Sigmoid colon (tissue), 7 donors: ENCODE measurements at regions of chr9 and their contacts with region 1.

Region 1: DNA sequence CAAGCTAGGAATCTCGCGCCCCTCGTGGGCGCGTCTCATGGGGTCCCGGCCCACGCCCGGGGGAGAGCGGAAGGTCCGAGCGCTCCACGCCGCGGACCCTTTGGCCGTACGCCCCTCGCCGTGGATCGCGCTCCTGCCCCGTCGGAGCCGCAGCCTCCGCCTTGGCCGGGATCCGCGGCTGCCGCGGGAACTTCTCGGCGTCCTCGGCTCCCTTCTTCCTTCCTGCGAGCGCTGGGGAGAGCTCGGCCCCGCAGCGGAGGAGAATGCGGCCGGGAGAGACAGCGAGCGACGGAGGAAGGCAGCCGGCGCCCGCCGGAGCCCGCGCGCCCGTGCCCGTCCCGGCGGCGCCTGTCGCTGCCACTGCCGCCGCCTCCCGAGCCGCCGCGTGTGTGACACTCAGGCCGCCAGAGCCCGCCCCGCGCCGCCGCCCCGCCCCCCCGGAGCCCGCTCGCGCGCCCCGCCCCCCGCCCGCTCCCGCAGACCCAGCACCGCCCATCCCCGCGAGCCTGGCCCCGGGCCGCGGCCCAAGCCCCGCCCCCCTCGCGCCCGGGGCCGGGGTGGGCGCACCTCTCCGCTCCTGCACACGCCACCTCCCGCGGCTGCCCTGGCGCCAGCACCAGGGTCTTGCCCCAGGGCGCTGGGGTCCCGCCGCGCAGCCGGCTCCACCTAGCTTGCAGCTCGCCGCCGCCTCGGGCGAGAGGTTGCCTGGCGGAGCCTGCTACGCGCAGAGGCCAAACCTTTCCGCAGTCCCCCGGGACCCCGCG is at the start of gene SHB:
- DNase-seq: peak; percentile 88
- H3K4me3 ChIP-seq: peak within 1 kb of the TSS; percentile 59 to 99 (median 76)
- H3K27ac ChIP-seq: peak within 1 kb of the TSS; percentile 82 to 95 (median 92)
- H3K4me1 ChIP-seq: peaks cover 3 to 50% (median 33%) of the 10 kb centered on the region in 4 donors
- H3K27me3 ChIP-seq: no peaks in the 10 kb centered on the region
- CTCF ChIP-seq: peak in 3 of 4 experiments; percentile 15 to 55 (median 49)
- EP300 ChIP-seq: no peak
- POLR2A ChIP-seq: no peak
- total RNA-seq, gene SHB: 6.8 to 33.7 (median 10.3) TPM

Region 2: GRCh38 chr9:37575921-37576721 is 492.9 kb before region 1 on chr9 and contains the start of gene FBXO10:
- intact Hi-C with region 1: loop called (anchors 10 kb)
- DNase-seq: peak; percentile 88
- H3K4me3 ChIP-seq: peak within 1 kb of the TSS; percentile 59 to 90 (median 75)
- H3K27ac ChIP-seq: peak within 1 kb of the TSS; percentile 85 to 97 (median 96)
- H3K4me1 ChIP-seq: peaks cover 0 to 37% (median 29%) of the 10 kb centered on the region in 4 donors
- H3K27me3 ChIP-seq: no peaks in the 10 kb centered on the region
- CTCF ChIP-seq: no peak
- EP300 ChIP-seq: peak in 1 of 4 donors; percentile 6
- POLR2A ChIP-seq: peak in 1 of 2 donors; percentile 32
- total RNA-seq, gene FBXO10: 14.8 to 19.4 (median 16.3) TPM

Region 3: GRCh38 chr9:37913480-37914153 is 155.4 kb before region 1 on chr9:
- intact Hi-C with region 1: loop called (anchors 1 kb)
- DNase-seq: peak; percentile 87
- H3K4me3 ChIP-seq: no peak overlapping the region
- H3K27ac ChIP-seq: peak overlapping the region in 2 of 4 donors; percentile 17 to 18
- H3K4me1 ChIP-seq: peaks cover 0 to 10% (median 2%) of the 10 kb centered on the region in 4 donors
- H3K27me3 ChIP-seq: no peaks in the 10 kb centered on the region
- CTCF ChIP-seq: peak; percentile 94 to 98 (median 96)
- EP300 ChIP-seq: no peak
- POLR2A ChIP-seq: no peak

Region 4: DNA sequence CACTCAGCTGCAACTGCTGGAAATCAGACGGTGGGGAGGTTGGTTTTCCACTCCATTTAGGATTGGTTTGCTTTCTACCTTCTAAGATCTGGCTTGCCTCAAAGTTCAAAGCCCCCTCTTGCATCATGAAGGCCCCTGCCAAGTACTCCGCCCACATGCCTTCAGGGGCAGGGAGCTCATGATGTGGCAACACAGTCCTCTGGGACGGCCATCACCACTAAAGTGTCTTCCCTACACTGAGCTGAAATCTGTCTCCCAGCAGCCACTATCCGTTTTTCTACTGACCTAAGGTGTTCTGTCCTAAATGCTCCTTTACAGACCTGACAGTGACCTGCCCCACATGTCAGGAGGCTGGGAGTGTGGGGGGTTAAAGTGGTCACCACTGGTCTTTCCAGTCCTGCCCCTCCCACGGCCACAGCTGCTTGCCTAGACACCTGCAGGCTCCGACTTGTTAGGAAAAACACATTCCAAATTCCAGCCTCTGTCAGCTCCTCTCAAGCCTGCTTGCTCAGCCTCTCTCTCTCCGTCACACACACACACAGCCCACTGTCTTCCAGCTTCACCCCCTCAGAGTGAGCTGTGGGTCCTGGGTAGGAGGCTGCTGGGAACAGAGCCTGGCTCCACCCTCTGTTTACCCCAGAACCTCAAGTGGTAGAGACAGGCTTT is 44.9 kb before region 1 on chr9:
- intact Hi-C with region 1: loop called (anchors 2 kb)
- DNase-seq: peak; percentile 92
- H3K4me3 ChIP-seq: no peak overlapping the region
- H3K27ac ChIP-seq: peak overlapping the region; percentile 70 to 90 (median 84)
- H3K4me1 ChIP-seq: peaks cover 0 to 87% (median 79%) of the 10 kb centered on the region in 4 donors
- H3K27me3 ChIP-seq: no peaks in the 10 kb centered on the region
- CTCF ChIP-seq: no peak
- EP300 ChIP-seq: no peak
- POLR2A ChIP-seq: no peak

Region 5: GRCh38 chr9:38392235-38393127 is 323.4 kb after region 1 on chr9 and contains the start of gene ALDH1B1:
- intact Hi-C with region 1: loop called (anchors 10 kb)
- DNase-seq: peak; percentile 93
- H3K4me3 ChIP-seq: peak within 1 kb of the TSS; percentile 64 to 88 (median 72)
- H3K27ac ChIP-seq: peak within 1 kb of the TSS; percentile 84 to 97 (median 88)
- H3K4me1 ChIP-seq: peaks cover 0 to 84% (median 59%) of the 10 kb centered on the region in 4 donors
- H3K27me3 ChIP-seq: no peaks in the 10 kb centered on the region
- CTCF ChIP-seq: no peak
- EP300 ChIP-seq: peak in 1 of 4 donors; percentile 7
- POLR2A ChIP-seq: peak; percentile 65 to 75
- total RNA-seq, gene ALDH1B1: 35.7 to 162 (median 101) TPM